Thyroid gland (tissue), 4 donors: ENCODE measurements at regions of chr16 and their contacts with region 1.

Region 1: DNA sequence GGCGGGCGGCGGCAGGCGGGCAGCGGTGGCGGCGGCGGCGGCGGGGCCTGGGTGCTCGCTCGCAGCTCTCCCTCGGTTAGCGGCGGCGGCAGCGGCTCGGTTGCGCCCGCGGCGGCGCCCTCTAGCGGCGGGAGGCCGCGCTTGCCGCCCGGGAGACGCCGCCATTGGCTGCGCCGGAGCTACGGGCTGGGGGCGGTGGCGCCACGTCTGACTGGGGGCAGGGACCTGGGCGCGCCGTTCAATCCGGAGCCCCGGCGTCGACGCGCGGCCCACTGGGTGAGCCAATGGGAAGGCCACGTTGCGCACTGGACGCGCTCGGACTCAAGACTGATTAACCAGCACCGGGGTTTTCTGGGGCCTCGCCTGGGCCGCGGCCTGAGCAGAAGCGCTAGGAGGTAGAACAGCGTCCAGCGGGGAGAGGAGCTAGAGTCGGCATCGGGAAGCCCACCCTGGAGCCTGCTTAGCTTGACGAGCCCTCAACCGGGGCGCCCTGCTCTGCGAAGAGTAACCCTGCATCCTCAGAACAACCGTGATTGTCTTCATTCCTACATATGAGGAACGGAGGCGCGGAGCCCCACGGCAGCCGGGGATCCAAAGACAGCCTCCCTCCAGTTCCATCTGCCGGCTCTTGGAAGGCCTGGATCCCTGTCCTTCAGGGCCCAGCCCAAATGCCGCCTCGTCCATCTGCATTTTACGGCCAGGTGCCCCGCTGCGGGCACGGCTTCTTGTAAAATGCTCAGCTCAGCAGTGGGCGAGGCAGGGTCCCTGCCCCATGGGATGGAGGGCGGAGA is at the start of gene ZC3H7A:
- DNase-seq: peak; percentile 96 to 97
- H3K4me3 ChIP-seq: peak within 1 kb of the TSS; percentile 87 to 93 (median 89)
- H3K27ac ChIP-seq: peak within 1 kb of the TSS; percentile 92 to 98 (median 97)
- H3K4me1 ChIP-seq: peaks cover 42 to 51% of the 10 kb centered on the region in 2 donors
- H3K27me3 ChIP-seq: no peaks in the 10 kb centered on the region
- CTCF ChIP-seq: peak in 4 of 6 experiments; percentile 84 to 99 (median 98)
- POLR2A ChIP-seq: peak; percentile 54 to 95
- total RNA-seq, gene ZC3H7A: 48.9 to 105 (median 62.7) TPM

Region 2: GRCh38 chr16:11742539-11743307 is 54.6 kb before region 1 on chr16 and contains the start of gene TXNDC11:
- intact Hi-C with region 1: loop called (anchors 5 kb)
- DNase-seq: peak; percentile 99
- H3K4me3 ChIP-seq: peak within 1 kb of the TSS; percentile 74 to 98 (median 80)
- H3K27ac ChIP-seq: peak within 1 kb of the TSS; percentile 98 to 99 (median 99)
- H3K4me1 ChIP-seq: peaks cover 25 to 39% of the 10 kb centered on the region in 2 donors
- H3K27me3 ChIP-seq: no peaks in the 10 kb centered on the region
- CTCF ChIP-seq: no peak
- POLR2A ChIP-seq: peak; percentile 99
- total RNA-seq, gene TXNDC11: 77.3 to 135 (median 115) TPM